Psoas muscle (tissue), 8 donors: ENCODE measurements at regions of chr7 and their contacts with region 1.

Region 1: GRCh38 chr7:2680792-2681490 is 7.1 kb upstream of the AMZ1 start:
- DNase-seq: peak; percentile 89 to 91
- ATAC-seq: peak; percentile 87 to 97 (median 90)
- H3K4me3 ChIP-seq: no peak overlapping the region
- H3K27ac ChIP-seq: no peak overlapping the region
- H3K4me1 ChIP-seq: no peaks in the 10 kb centered on the region
- H3K27me3 ChIP-seq: peaks cover 0 to 45% (median 5%) of the 10 kb centered on the region in 3 donors
- CTCF ChIP-seq: peak; percentile 72

Region 2: GRCh38 chr7:2451171-2452073 is 229.5 kb before region 1 on chr7:
- intact Hi-C with region 1: loop called (anchors 2 kb)
- DNase-seq: peak; percentile 84 to 92
- ATAC-seq: peak; percentile 95 to 98 (median 96)
- H3K4me3 ChIP-seq: peak overlapping the region; percentile 72
- H3K27ac ChIP-seq: no peak overlapping the region
- H3K4me1 ChIP-seq: peaks cover 12% of the 10 kb centered on the region
- H3K27me3 ChIP-seq: no peaks in the 10 kb centered on the region
- CTCF ChIP-seq: peak; percentile 87

Region 3: DNA sequence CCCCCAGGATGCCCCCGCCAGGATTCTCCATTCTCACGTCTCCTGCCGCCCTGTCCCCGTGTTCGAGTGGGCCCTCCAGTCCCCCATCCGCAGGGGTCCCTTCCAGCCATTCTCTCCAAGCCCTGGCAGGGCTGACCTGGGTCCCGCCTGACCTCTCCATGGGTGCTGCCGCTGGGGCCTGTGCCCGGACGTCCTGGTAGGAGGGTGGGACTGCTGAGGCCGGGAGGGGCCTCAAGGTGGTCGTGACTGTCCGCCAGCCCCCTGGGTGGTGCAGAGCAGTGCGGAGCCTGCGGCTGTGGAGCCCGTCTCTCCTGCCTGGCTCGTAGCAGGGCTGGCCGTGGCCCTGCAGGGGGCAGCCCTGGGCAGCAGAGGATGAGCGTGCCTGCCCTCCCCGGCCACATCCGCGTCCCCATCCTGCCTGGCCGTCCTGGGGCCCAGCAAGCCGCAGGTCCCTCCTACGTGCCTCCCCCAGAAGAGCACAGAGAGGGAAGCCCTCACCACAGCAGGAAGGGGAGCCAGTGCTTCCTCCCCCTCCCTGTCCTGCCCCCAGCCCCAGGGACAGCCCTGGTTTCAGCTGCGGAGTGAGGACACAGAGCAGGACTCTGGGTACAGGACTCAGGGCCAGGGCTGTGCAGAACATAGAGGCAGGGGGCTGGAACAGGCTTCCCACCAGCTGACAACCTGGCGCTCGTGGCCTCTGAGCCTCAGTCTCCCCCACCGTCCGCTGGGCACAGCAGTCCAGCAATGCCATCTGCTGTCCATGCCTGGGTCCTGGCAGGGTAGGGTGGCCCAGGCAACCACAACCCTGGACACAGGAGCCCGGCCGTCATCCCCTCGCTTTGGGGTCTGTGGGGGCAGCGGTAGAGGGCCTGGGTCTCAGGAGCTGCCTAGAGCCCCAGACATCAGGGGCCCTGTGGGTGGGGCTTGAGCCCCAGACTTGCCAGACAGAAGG is 203.2 kb before region 1 on chr7:
- intact Hi-C with region 1: loop called in 1 of 2 experiments (anchors 5 kb)
- DNase-seq: peak; percentile 69 to 73
- ATAC-seq: peak; percentile 69 to 77 (median 74)
- H3K4me3 ChIP-seq: no peak overlapping the region
- H3K27ac ChIP-seq: no peak overlapping the region
- H3K4me1 ChIP-seq: peaks cover 15% of the 10 kb centered on the region
- H3K27me3 ChIP-seq: peaks cover 0 to 58% (median 17%) of the 10 kb centered on the region in 3 donors
- CTCF ChIP-seq: peak; percentile 59

Region 4: GRCh38 chr7:2567679-2568278 is 113.2 kb before region 1 on chr7:
- intact Hi-C with region 1: loop called (anchors 2 to 5 kb)
- DNase-seq: peak in 1 of 2 donors; percentile 51
- ATAC-seq: peak; percentile 62 to 81 (median 73)
- H3K4me3 ChIP-seq: no peak overlapping the region
- H3K27ac ChIP-seq: no peak overlapping the region
- H3K4me1 ChIP-seq: no peaks in the 10 kb centered on the region
- H3K27me3 ChIP-seq: no peaks in the 10 kb centered on the region
- CTCF ChIP-seq: peak; percentile 56